IMR-90 (cell line): ENCODE measurements at regions of chr2 and their contacts with region 1.

Region 1: GRCh38 chr2:74690571-74690970 is 36.5 kb downstream of the SEMA4F start:
- DNase-seq: peak; percentile 71
- ATAC-seq: peak; percentile 93
- H3K4me3 ChIP-seq: no peak overlapping the region
- H3K27ac ChIP-seq: no peak overlapping the region
- H3K4me1 ChIP-seq: peaks cover 9% of the 10 kb centered on the region; the same call in 1 of the 2 replicates
- H3K27me3 ChIP-seq: peaks cover 4% of the 10 kb centered on the region; the same call in 1 of the 2 replicates
- CTCF ChIP-seq: peak; percentile 91
- POLR2A ChIP-seq: no peak
- RAD21 ChIP-seq: peak; percentile 98

Region 2: GRCh38 chr2:74864846-74865722 is 174.5 kb after region 1 on chr2:
- CTCF ChIA-PET with region 1: no interaction called
- POLR2A ChIA-PET with region 1: no interaction called
- dilution Hi-C with region 1: no loop called
- in situ Hi-C with region 1: no loop called
- intact Hi-C with region 1: loop called (anchors 5 kb)
- DNase-seq: peak; percentile 70
- ATAC-seq: peak; percentile 56
- H3K4me3 ChIP-seq: no peak overlapping the region
- H3K27ac ChIP-seq: no peak overlapping the region
- H3K4me1 ChIP-seq: peaks cover 27% of the 10 kb centered on the region
- H3K27me3 ChIP-seq: no peaks in the 10 kb centered on the region
- CTCF ChIP-seq: 0 out of 2 replicates have a peak, but pooled peaks have one; percentile 14
- POLR2A ChIP-seq: no peak
- RAD21 ChIP-seq: no peak

Region 3: GRCh38 chr2:75064691-75065396 is 374.3 kb after region 1 on chr2:
- CTCF ChIA-PET with region 1: no interaction called
- POLR2A ChIA-PET with region 1: no interaction called
- dilution Hi-C with region 1: no loop called
- in situ Hi-C with region 1: no loop called
- intact Hi-C with region 1: loop called (anchors 10 kb)
- DNase-seq: peak; percentile 58
- ATAC-seq: peak; percentile 74
- H3K4me3 ChIP-seq: no peak overlapping the region; the same call in 1 of the 2 replicates
- H3K27ac ChIP-seq: no peak overlapping the region; the same call in 1 of the 2 replicates
- H3K4me1 ChIP-seq: peaks cover 4% of the 10 kb centered on the region; the same call in 1 of the 2 replicates
- H3K27me3 ChIP-seq: no peaks in the 10 kb centered on the region
- CTCF ChIP-seq: peak; percentile 82
- POLR2A ChIP-seq: no peak
- RAD21 ChIP-seq: peak; percentile 66

Region 4: DNA sequence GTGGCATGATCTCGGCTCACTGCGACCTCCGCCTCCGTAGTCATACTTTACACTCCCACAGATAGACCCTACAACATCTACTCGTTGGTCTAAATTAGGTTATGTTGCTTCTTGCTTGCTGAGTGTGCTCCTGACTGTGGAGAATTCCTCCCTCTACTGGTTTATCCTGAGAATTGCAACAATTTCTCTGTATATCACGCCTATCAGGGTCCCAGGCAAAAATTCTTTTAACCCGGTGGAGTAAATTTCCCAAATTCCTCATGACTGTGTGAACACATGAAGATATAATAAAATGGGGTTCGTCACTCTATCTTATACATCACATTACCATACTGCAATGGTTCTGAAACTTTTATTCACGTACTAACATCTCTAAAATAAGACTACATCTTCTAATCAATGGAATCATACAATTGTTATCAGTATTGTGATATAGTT is 713.4 kb after region 1 on chr2:
- CTCF ChIA-PET with region 1: no interaction called
- POLR2A ChIA-PET with region 1: no interaction called
- dilution Hi-C with region 1: no loop called
- in situ Hi-C with region 1: loop called (anchors 25 kb)
- intact Hi-C with region 1: loop called (anchors 2 kb)
- DNase-seq: peak; percentile 59
- ATAC-seq: peak; percentile 94
- H3K4me3 ChIP-seq: no peak overlapping the region
- H3K27ac ChIP-seq: no peak overlapping the region
- H3K4me1 ChIP-seq: no peaks in the 10 kb centered on the region
- H3K27me3 ChIP-seq: peaks cover 14% of the 10 kb centered on the region
- CTCF ChIP-seq: peak; percentile 85
- POLR2A ChIP-seq: no peak
- RAD21 ChIP-seq: peak; percentile 93

Region 5: GRCh38 chr2:75627895-75628504 is 937.4 kb after region 1 on chr2:
- CTCF ChIA-PET with region 1: no interaction called
- POLR2A ChIA-PET with region 1: no interaction called
- dilution Hi-C with region 1: no loop called
- in situ Hi-C with region 1: loop called (anchors 25 kb)
- intact Hi-C with region 1: loop called (anchors 5 kb)
- DNase-seq: peak; percentile 80
- ATAC-seq: peak; percentile 97
- H3K4me3 ChIP-seq: no peak overlapping the region
- H3K27ac ChIP-seq: no peak overlapping the region
- H3K4me1 ChIP-seq: no peaks in the 10 kb centered on the region
- H3K27me3 ChIP-seq: peaks cover 18% of the 10 kb centered on the region
- CTCF ChIP-seq: peak; percentile 90
- POLR2A ChIP-seq: no peak
- RAD21 ChIP-seq: peak; percentile 93